ENCODE measurements at regions of chr16 and their contacts with region 1.

Region 1: GRCh38 chr16:14172200-14172782 is 101.2 kb downstream of the MRTFB start:
- DNase-seq: no peak
- H3K4me3 ChIP-seq: no peak overlapping the region
- H3K27ac ChIP-seq: no peak overlapping the region
- H3K4me1 ChIP-seq: peaks cover 5% of the 10 kb centered on the region
- H3K27me3 ChIP-seq: no peaks in the 10 kb centered on the region
- CTCF ChIP-seq: no peak

Region 2: GRCh38 chr16:14121142-14121541 is 51.1 kb before region 1 on chr16:
- intact Hi-C with region 1: loop called (anchors 10 kb)
- DNase-seq: no peak
- H3K4me3 ChIP-seq: no peak overlapping the region
- H3K27ac ChIP-seq: no peak overlapping the region
- H3K4me1 ChIP-seq: peaks cover 30% of the 10 kb centered on the region
- H3K27me3 ChIP-seq: no peaks in the 10 kb centered on the region
- CTCF ChIP-seq: no peak

Region 3: GRCh38 chr16:14219983-14220382 is 47.7 kb after region 1 on chr16:
- intact Hi-C with region 1: no loop called
- DNase-seq: no peak
- H3K4me3 ChIP-seq: no peak overlapping the region
- H3K27ac ChIP-seq: no peak overlapping the region
- H3K4me1 ChIP-seq: no peaks in the 10 kb centered on the region
- H3K27me3 ChIP-seq: no peaks in the 10 kb centered on the region
- CTCF ChIP-seq: no peak

Region 4: DNA sequence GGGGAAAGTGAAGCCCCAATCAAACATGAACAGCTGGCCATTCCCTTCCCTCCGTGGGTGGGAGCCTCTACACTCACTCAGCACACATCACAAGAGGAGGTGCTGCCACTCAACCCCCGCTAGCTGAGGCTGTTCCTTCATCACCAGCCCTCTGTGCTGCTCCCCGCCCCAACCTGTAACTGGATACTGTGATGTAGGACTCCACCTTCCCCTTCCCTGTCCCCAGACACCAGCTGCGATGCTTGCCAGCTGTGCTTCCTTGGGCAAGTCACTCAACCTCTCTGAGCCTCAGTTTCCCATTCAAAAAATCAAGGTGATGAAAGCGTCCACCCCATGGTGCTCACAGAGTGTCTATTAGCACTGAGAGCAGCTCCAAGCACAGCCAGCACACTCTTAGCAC is 172.0 kb after region 1 on chr16:
- intact Hi-C with region 1: no loop called
- DNase-seq: no peak
- H3K4me3 ChIP-seq: no peak overlapping the region
- H3K27ac ChIP-seq: no peak overlapping the region
- H3K4me1 ChIP-seq: peaks cover 11% of the 10 kb centered on the region
- H3K27me3 ChIP-seq: no peaks in the 10 kb centered on the region
- CTCF ChIP-seq: no peak

Measured in left ventricle myocardium inferior (tissue), 1 donor.